ENCODE measurements at regions of chr3 and their contacts with region 1.

Region 1: DNA sequence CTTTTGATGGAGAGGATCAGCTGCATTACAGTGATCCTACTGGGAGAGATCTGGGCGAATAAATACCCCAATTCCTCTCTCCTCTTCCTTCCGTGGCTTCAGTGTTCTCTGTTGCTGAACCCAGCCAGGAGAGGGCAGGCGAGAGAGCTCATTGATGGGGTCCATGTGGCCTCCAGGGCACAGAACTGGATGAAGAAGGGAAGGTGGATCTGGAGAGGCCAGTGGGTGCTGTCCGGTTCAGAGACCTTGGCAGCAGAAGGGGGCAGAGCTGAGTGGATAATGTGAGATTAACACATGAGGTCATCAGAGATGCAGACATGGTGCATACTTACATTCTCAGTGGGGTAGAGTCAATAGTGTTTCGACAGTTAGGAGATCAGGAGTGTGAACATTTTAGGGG is 193.6 kb downstream of the CLSTN2 start:
- DNase-seq: peak; percentile 1
- ATAC-seq: peak; percentile 97
- H3K4me3 ChIP-seq: no peak overlapping the region
- H3K27ac ChIP-seq: no peak overlapping the region
- H3K4me1 ChIP-seq: no peaks in the 10 kb centered on the region
- H3K27me3 ChIP-seq: peaks cover 30% of the 10 kb centered on the region
- CTCF ChIP-seq: peak; percentile 54 to 74 (median 68); a peak in 5 of 6 replicates
- POLR2A ChIP-seq: no peak
- RAD21 ChIP-seq: peak; percentile 50

Region 2: GRCh38 chr3:140358686-140359085 is 230.1 kb after region 1 on chr3:
- CTCF ChIA-PET with region 1: no interaction called
- POLR2A ChIA-PET with region 1: no interaction called
- RAD21 ChIA-PET with region 1: no interaction called
- intact Hi-C with region 1: no loop called
- DNase-seq: no peak
- ATAC-seq: no peak
- H3K4me3 ChIP-seq: no peak overlapping the region
- H3K27ac ChIP-seq: no peak overlapping the region
- H3K4me1 ChIP-seq: no peaks in the 10 kb centered on the region
- H3K27me3 ChIP-seq: peaks cover 45% of the 10 kb centered on the region
- CTCF ChIP-seq: no peak
- POLR2A ChIP-seq: no peak
- RAD21 ChIP-seq: no peak

Region 3: GRCh38 chr3:140499114-140499757 is 370.6 kb after region 1 on chr3:
- CTCF ChIA-PET with region 1: interaction called, 3 read pairs
- POLR2A ChIA-PET with region 1: no interaction called
- RAD21 ChIA-PET with region 1: no interaction called
- intact Hi-C with region 1: loop called (anchors 1 kb)
- DNase-seq: no peak
- ATAC-seq: peak; percentile 60; the same call in 1 of the 2 replicates
- H3K4me3 ChIP-seq: no peak overlapping the region
- H3K27ac ChIP-seq: no peak overlapping the region
- H3K4me1 ChIP-seq: no peaks in the 10 kb centered on the region
- H3K27me3 ChIP-seq: peaks cover 25% of the 10 kb centered on the region; the same call in 1 of the 2 replicates
- CTCF ChIP-seq: peak; percentile 3 to 41 (median 19); a peak in 2 of 6 replicates
- POLR2A ChIP-seq: no peak
- RAD21 ChIP-seq: peak; percentile 51

Region 4: DNA sequence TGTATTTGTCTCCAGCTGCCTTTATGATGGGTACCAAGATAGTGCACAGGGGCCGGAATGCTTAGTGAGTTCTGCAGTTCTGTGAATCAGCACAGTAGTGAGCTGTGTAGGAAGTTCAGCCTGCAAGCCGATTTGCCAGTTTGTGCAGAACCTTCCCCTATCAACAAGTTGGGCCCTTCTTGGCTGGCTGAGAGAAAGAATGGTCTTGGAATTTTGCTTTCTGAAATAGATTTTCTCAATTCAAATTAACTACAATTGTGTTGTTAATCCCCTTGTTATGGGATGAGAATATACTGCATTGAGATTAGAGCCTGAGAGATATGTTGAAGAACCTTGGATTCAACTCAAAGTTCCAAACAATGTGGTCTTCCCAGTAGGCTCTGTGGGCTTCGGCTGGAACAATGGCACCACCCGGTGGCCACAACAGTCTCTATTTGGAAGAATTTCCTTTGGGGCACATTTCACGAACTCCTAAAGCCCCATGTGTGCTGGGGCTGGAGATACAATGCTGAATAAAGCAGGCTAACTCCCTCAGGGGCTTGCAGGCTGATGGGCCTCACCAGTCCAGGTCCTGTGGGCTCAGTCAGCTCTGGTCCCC is 608.3 kb after region 1 on chr3:
- CTCF ChIA-PET with region 1: no interaction called
- POLR2A ChIA-PET with region 1: no interaction called
- RAD21 ChIA-PET with region 1: no interaction called
- intact Hi-C with region 1: loop called (anchors 1 kb)
- DNase-seq: no peak
- ATAC-seq: peak; percentile 63
- H3K4me3 ChIP-seq: no peak overlapping the region
- H3K27ac ChIP-seq: no peak overlapping the region
- H3K4me1 ChIP-seq: no peaks in the 10 kb centered on the region
- H3K27me3 ChIP-seq: peaks cover 49% of the 10 kb centered on the region
- CTCF ChIP-seq: peak; percentile 24 to 52 (median 35); a peak in 4 of 6 replicates
- POLR2A ChIP-seq: no peak
- RAD21 ChIP-seq: peak; percentile 65

Region 5: DNA sequence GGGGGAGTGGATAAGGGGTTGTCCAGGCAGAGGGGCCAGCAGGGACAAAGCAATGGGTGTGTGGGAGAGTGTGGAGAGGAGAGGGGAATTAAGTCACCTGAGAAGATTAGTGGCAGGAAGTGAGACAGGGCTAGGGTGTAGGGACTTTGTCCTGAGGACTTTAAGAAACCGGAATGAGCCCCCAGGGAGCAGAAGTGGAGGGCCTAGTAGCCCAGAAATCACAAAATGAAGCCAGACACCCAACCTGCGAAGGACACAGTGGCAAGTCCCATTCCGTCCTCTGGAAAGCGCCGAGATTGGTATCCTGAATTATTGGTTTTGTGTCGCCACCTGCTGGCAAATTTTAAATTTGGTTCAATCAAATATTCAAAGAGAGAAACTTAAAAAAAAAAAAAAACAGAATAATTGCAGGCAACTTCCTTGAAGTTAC is 735.0 kb after region 1 on chr3:
- CTCF ChIA-PET with region 1: interaction called, 5 read pairs
- POLR2A ChIA-PET with region 1: no interaction called
- RAD21 ChIA-PET with region 1: no interaction called
- intact Hi-C with region 1: loop called (anchors 1 kb)
- DNase-seq: peak; percentile 45
- ATAC-seq: peak; percentile 86
- H3K4me3 ChIP-seq: no peak overlapping the region
- H3K27ac ChIP-seq: no peak overlapping the region
- H3K4me1 ChIP-seq: no peaks in the 10 kb centered on the region
- H3K27me3 ChIP-seq: peaks cover 8% of the 10 kb centered on the region; the same call in 1 of the 2 replicates
- CTCF ChIP-seq: peak in 2 of 3 experiments; percentile 57 to 59; a peak in 5 of 6 replicates
- POLR2A ChIP-seq: no peak
- RAD21 ChIP-seq: peak; percentile 76